Cardiac septum (tissue), 1 donor: ENCODE measurements at regions of chr15 and their contacts with region 1.

Region 1: GRCh38 chr15:65856821-65857455 is 12.4 kb upstream of the RAB11A start:
- DNase-seq: peak; percentile 78

Region 2: DNA sequence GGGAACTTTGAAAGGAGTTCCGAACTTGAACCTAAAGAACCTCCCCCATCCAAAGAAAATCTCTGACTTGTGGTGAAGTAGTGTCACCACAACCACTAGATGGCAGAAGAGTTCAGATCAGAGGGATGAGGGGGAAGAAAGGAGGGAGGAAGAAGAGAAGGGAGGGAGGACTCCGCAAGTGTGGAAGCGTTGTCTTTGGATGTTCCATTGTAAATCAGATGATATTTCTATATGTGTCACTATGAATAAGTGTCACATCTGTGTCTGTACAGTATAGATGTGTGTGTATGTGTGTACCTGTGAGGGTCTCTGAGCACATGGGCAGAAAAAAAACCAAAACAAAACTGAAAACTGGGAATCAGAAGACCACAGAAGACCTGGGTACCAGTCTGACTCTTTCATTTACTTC is 218.3 kb before region 1 on chr15:
- intact Hi-C with region 1: loop called (anchors 5 kb)
- DNase-seq: no peak